ENCODE measurements at regions of chr15 and their contacts with region 1.

Region 1: GRCh38 chr15:23877502-23878412 is 190.7 kb upstream of the NDN start:
- DNase-seq: peak in 1 of 2 donors; percentile 53
- ATAC-seq: no peak
- H3K4me3 ChIP-seq: no peak overlapping the region
- H3K27ac ChIP-seq: no peak overlapping the region
- H3K4me1 ChIP-seq: no peaks in the 10 kb centered on the region
- H3K27me3 ChIP-seq: peaks cover 0 to 2% of the 10 kb centered on the region in 2 donors

Region 2: GRCh38 chr15:23642413-23643044 is 235.2 kb before region 1 on chr15:
- intact Hi-C with region 1: loop called (anchors 5 to 10 kb)
- DNase-seq: no peak
- ATAC-seq: peak; percentile 58
- H3K4me3 ChIP-seq: no peak overlapping the region
- H3K27ac ChIP-seq: no peak overlapping the region
- H3K4me1 ChIP-seq: no peaks in the 10 kb centered on the region
- H3K27me3 ChIP-seq: no peaks in the 10 kb centered on the region